ENCODE measurements at regions of chrX and their contacts with region 1.

Region 1: DNA sequence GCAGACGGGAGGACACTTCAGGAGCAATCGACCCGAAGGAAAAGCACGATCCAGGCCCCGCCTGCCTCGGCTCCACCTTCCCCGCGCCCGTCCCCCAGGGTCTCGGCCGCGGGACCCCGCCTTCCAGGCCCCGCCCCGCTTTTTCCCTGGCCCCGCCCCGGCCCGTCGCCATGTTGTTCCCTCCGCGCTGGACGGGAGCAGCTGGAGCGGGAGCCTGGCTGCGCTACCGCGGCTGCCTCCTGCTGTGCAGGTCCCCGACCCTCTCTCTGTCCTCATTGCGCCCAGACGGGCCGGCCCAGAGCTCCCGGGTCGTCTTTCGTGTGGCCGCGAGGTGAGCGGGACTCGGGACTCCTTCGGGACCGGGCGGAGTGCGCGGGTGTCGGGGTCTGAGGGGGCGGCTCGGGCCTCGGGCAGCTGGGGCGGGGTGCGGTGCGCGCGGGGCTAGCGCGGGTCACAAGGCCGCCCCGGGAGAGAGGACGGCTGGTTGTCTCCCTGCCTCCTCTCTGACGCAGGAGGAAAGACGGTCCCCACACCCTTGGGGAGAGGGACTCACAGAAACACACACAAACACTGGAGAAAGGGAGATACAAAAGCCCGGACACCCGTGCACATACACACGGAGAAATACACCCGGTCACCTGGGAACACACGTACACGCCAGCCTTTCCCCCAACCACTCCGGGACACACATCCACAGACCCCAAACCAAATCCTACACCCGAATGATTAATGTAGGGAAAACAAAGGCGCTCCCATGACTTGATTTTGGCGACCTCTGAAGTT is at the start of gene RAB9A:
- DNase-seq: peak; percentile 88
- H3K4me3 Mint-ChIP-seq: peak within 1 kb of the TSS; percentile 87
- H3K27ac Mint-ChIP-seq: peak within 1 kb of the TSS; percentile 96
- H3K4me1 Mint-ChIP-seq: peaks cover 58% of the 10 kb centered on the region
- H3K27me3 Mint-ChIP-seq: no peaks in the 10 kb centered on the region
- total RNA-seq, gene RAB9A: 28.2 to 32.1 TPM

Region 2: GRCh38 chrX:13440176-13440575 is 249.0 kb before region 1 on chrX:
- CTCF ChIA-PET with region 1: no interaction called
- POLR2A ChIA-PET with region 1: no interaction called
- intact Hi-C with region 1: no loop called
- DNase-seq: no peak
- H3K4me3 Mint-ChIP-seq: no peak overlapping the region
- H3K27ac Mint-ChIP-seq: no peak overlapping the region
- H3K4me1 Mint-ChIP-seq: no peaks in the 10 kb centered on the region
- H3K27me3 Mint-ChIP-seq: no peaks in the 10 kb centered on the region

Region 3: GRCh38 chrX:13658602-13659001 is 30.5 kb before region 1 on chrX:
- CTCF ChIA-PET with region 1: interaction called, 5 read pairs
- POLR2A ChIA-PET with region 1: interaction called, 18 read pairs
- intact Hi-C with region 1: loop called (anchors 1 kb)
- DNase-seq: no peak
- H3K4me3 Mint-ChIP-seq: no peak overlapping the region
- H3K27ac Mint-ChIP-seq: peak overlapping the region; percentile 33
- H3K4me1 Mint-ChIP-seq: peaks cover 28% of the 10 kb centered on the region
- H3K27me3 Mint-ChIP-seq: no peaks in the 10 kb centered on the region

Region 4: GRCh38 chrX:13669246-13669737 is 19.9 kb before region 1 on chrX:
- CTCF ChIA-PET with region 1: no interaction called
- POLR2A ChIA-PET with region 1: interaction called, 21 read pairs
- intact Hi-C with region 1: loop called (anchors 1 kb)
- DNase-seq: peak; percentile 76
- H3K4me3 Mint-ChIP-seq: peak overlapping the region; percentile 70
- H3K27ac Mint-ChIP-seq: peak overlapping the region; percentile 95
- H3K4me1 Mint-ChIP-seq: peaks cover 24% of the 10 kb centered on the region
- H3K27me3 Mint-ChIP-seq: no peaks in the 10 kb centered on the region

Measured in activated CD4-positive, alpha-beta memory T cell treated with anti-CD3 and anti-CD28 coated beads for 36 hours (primary cell).